T-cell (primary cell): ENCODE measurements at regions of chr3 and their contacts with region 1.

Region 1: GRCh38 chr3:141352262-141352984 is 15.9 kb upstream of the ZBTB38 start:
- DNase-seq: no peak
- ATAC-seq: no peak
- H3K4me3 ChIP-seq: no peak overlapping the region
- H3K4me3 Mint-ChIP-seq: no peak overlapping the region
- H3K27ac ChIP-seq: no peak overlapping the region
- H3K27ac Mint-ChIP-seq: no peak overlapping the region
- H3K4me1 ChIP-seq: no peaks in the 10 kb centered on the region
- H3K4me1 Mint-ChIP-seq: no peaks in the 10 kb centered on the region
- H3K27me3 ChIP-seq: no peaks in the 10 kb centered on the region
- H3K27me3 Mint-ChIP-seq: peaks cover 6 to 8% of the 10 kb centered on the region in 2 donors

Region 2: GRCh38 chr3:141094790-141095545 is 257.5 kb before region 1 on chr3:
- CTCF ChIA-PET with region 1: no interaction called
- POLR2A ChIA-PET with region 1: no interaction called
- DNase-seq: no peak
- ATAC-seq: no peak
- H3K4me3 ChIP-seq: no peak overlapping the region
- H3K4me3 Mint-ChIP-seq: no peak overlapping the region
- H3K27ac ChIP-seq: no peak overlapping the region
- H3K27ac Mint-ChIP-seq: no peak overlapping the region
- H3K4me1 ChIP-seq: no peaks in the 10 kb centered on the region
- H3K4me1 Mint-ChIP-seq: no peaks in the 10 kb centered on the region
- H3K27me3 ChIP-seq: no peaks in the 10 kb centered on the region
- H3K27me3 Mint-ChIP-seq: peaks cover 0 to 1% of the 10 kb centered on the region in 2 donors

Region 3: DNA sequence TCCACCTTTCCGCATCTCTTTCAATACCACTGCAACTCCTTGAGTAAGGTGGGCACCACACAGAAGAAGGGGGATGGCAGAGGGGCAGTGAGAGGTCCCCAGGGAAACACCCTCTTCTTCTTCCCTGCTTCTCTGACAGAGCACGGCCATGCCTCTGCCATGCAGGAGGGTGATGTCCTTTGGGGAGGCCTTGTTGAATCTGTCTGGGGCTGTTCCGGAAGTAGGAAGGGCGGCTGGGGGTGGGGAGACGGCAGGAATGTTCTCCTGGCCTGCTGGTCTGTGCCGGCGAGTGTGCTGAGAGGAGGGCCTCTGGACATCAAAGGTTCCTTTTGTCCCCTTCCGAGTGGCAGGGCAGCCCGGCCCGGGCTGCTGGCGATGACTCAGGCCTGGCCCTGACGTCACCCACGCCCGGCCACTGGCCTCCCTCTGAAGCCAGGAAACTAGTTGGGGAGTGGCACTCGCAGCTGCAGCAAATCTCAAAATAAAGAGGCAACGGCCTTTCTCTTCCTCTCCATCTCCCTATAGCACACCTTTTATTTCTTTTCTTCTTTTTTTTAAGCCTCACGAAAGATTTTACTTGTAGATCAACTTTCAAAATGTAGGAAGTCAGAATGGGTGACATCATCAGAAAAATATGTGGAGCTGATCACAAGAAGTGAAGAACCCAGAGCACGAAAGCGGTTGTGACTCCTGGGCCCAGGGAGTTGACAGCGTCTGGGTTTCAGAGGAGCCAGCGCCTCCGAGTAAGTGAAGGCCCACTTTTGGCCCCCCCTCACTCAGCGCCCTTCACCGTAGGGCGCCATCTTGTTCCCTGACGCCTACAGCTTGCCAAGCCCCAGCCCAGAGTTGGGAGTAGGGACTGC is 15.9 kb after region 1 on chr3 and contains the start of gene ZBTB38:
- CTCF ChIA-PET with region 1: no interaction called
- POLR2A ChIA-PET with region 1: no interaction called
- DNase-seq: peak in 1 of 35 experiments; percentile 2
- ATAC-seq: no peak
- H3K4me3 ChIP-seq: no peak within 1 kb of the TSS
- H3K4me3 Mint-ChIP-seq: no peak within 1 kb of the TSS
- H3K27ac ChIP-seq: no peak within 1 kb of the TSS
- H3K27ac Mint-ChIP-seq: no peak within 1 kb of the TSS
- H3K4me1 ChIP-seq: no peaks in the 10 kb centered on the region
- H3K4me1 Mint-ChIP-seq: peaks cover 0 to 7% (median 4%) of the 10 kb centered on the region in 3 donors
- H3K27me3 ChIP-seq: no peaks in the 10 kb centered on the region
- H3K27me3 Mint-ChIP-seq: no peaks in the 10 kb centered on the region
- total RNA-seq, gene ZBTB38: 38.7 to 72.3 (median 58.2) TPM

Region 4: GRCh38 chr3:141425523-141426233 is 73.3 kb after region 1 on chr3:
- CTCF ChIA-PET with region 1: no interaction called
- POLR2A ChIA-PET with region 1: interaction called in 1 of 2 experiments, 10 read pairs
- DNase-seq: no peak
- ATAC-seq: no peak
- H3K4me3 ChIP-seq: no peak overlapping the region
- H3K4me3 Mint-ChIP-seq: no peak overlapping the region
- H3K27ac ChIP-seq: no peak overlapping the region
- H3K27ac Mint-ChIP-seq: no peak overlapping the region
- H3K4me1 ChIP-seq: peaks cover 0 to 28% of the 10 kb centered on the region in 2 experiments
- H3K4me1 Mint-ChIP-seq: peaks cover 34 to 51% (median 42%) of the 10 kb centered on the region in 3 donors
- H3K27me3 ChIP-seq: no peaks in the 10 kb centered on the region
- H3K27me3 Mint-ChIP-seq: no peaks in the 10 kb centered on the region

Region 5: GRCh38 chr3:141710573-141711251 is 358.3 kb after region 1 on chr3:
- CTCF ChIA-PET with region 1: no interaction called
- POLR2A ChIA-PET with region 1: interaction called in 1 of 2 experiments, 10 read pairs
- DNase-seq: no peak
- ATAC-seq: no peak
- H3K4me3 ChIP-seq: no peak overlapping the region
- H3K4me3 Mint-ChIP-seq: no peak overlapping the region
- H3K27ac ChIP-seq: no peak overlapping the region
- H3K27ac Mint-ChIP-seq: no peak overlapping the region
- H3K4me1 ChIP-seq: no peaks in the 10 kb centered on the region
- H3K4me1 Mint-ChIP-seq: no peaks in the 10 kb centered on the region
- H3K27me3 ChIP-seq: no peaks in the 10 kb centered on the region
- H3K27me3 Mint-ChIP-seq: no peaks in the 10 kb centered on the region